Activated CD4-positive, alpha-beta T cell treated with anti-CD3 and anti-CD28 coated beads for 36 hours (primary cell): ENCODE measurements at regions of chr2 and their contacts with region 1.

Region 1: DNA sequence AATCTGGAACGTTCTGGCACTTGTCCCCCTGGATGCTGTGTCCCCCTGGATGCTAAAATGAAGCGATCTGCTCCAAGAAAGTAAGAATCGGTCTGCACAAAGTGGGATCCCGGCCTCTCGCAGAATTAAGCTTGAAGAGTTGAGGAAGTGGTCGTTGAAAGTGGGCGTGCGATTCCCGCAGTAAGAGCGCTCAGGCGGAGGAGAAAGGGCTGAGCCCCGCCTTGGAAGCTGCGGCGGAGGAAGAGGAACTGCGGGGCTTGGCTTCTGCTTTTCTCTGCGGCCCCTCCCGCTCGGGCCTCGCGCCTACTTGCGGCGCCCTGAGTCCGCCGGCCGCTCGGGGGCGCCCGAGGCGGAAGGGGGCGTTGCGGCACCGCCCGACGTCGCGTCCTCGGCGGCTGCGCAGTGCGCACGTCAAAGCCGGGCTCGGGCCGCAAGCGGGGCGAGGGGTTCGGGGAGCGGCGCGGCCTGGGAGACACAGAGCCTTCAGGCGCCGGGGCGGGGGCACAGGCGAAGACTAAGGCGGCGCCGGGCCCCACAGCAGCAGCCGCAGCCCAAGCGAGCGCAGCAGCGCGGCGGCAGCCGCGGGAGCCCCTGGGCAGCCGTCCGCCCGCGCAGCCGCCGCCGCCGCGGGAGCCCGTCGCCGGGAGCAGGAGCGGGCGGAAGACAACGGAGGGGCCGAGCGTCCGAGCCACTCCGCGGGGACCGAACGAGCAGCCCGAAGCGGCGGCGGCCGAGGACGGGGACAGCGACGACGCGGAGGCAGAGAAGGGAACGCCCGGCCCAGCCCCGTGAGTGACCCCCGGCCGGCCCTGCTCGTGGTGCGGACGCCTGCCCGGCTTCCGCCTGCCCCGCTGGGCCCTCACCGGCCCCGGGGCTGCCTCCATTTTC is at the start of gene CAB39:
- DNase-seq: peak; percentile 93
- ATAC-seq: peak; percentile 83
- H3K4me3 Mint-ChIP-seq: peak within 1 kb of the TSS; percentile 94
- H3K27ac Mint-ChIP-seq: peak within 1 kb of the TSS; percentile 95
- H3K4me1 Mint-ChIP-seq: peaks cover 38% of the 10 kb centered on the region
- H3K27me3 Mint-ChIP-seq: no peaks in the 10 kb centered on the region
- total RNA-seq, gene CAB39: 122 to 148 TPM

Region 2: DNA sequence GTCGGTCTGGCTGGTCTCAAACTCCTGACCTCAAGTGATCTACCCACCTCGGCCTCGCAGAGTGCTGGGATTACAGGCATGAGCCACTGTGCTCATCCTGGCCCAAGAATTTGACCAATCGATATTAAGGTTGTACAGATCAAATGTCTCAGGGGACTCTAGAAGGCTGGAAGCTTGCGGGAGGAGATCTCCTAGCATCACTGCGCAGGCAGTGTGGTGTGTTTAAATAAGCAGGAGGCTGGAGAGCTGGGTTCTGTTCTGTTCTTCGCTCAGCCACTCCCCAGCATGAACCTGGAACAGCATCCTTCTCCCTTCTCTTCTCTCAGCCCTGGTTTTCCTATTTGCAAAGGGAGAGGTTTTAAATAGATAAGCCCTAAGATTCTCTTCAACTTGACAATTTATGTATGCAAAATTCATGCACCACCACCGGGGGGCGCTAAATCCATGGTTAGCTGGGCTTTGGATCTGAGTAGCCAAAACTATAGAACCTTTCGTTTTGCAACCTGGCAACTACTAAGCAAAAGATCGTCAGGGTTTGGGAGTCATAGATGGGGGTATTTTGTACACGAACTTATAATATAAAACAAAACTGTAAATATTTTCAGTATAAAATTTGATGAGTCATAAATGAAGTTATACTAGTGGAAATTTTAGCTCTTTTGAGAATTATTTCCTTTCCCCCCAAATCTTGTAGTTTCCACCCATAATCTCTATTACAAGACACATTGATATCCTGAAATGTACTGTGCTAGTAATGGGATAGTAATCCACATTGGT is 704.6 kb before region 1 on chr2:
- CTCF ChIA-PET with region 1: no interaction called
- POLR2A ChIA-PET with region 1: no interaction called
- intact Hi-C with region 1: loop called in 1 of 2 experiments (anchors 10 kb)
- DNase-seq: peak; percentile 92
- ATAC-seq: peak; percentile 69
- H3K4me3 Mint-ChIP-seq: no peak overlapping the region
- H3K27ac Mint-ChIP-seq: no peak overlapping the region
- H3K4me1 Mint-ChIP-seq: peaks cover 5% of the 10 kb centered on the region
- H3K27me3 Mint-ChIP-seq: no peaks in the 10 kb centered on the region

Region 3: GRCh38 chr2:230411570-230412370 is 300.9 kb before region 1 on chr2:
- CTCF ChIA-PET with region 1: no interaction called
- POLR2A ChIA-PET with region 1: interaction called, 3 read pairs
- intact Hi-C with region 1: loop called in 1 of 2 experiments (anchors 5 kb)
- DNase-seq: peak; percentile 76
- ATAC-seq: peak; percentile 66
- H3K4me3 Mint-ChIP-seq: peak overlapping the region; percentile 85
- H3K27ac Mint-ChIP-seq: peak overlapping the region; percentile 96
- H3K4me1 Mint-ChIP-seq: peaks cover 60% of the 10 kb centered on the region
- H3K27me3 Mint-ChIP-seq: no peaks in the 10 kb centered on the region

Region 4: GRCh38 chr2:230658877-230659652 is 53.6 kb before region 1 on chr2:
- CTCF ChIA-PET with region 1: interaction called, 8 read pairs
- POLR2A ChIA-PET with region 1: interaction called, 5 read pairs
- intact Hi-C with region 1: loop called (anchors 1 kb)
- DNase-seq: peak; percentile 90
- ATAC-seq: peak; percentile 74
- H3K4me3 Mint-ChIP-seq: peak overlapping the region; percentile 73
- H3K27ac Mint-ChIP-seq: peak overlapping the region; percentile 97
- H3K4me1 Mint-ChIP-seq: peaks cover 92% of the 10 kb centered on the region
- H3K27me3 Mint-ChIP-seq: no peaks in the 10 kb centered on the region

Region 5: GRCh38 chr2:230731512-230731911 is 18.8 kb after region 1 on chr2:
- CTCF ChIA-PET with region 1: interaction called, 23 read pairs
- POLR2A ChIA-PET with region 1: no interaction called
- intact Hi-C with region 1: no loop called
- DNase-seq: no peak
- ATAC-seq: no peak
- H3K4me3 Mint-ChIP-seq: no peak overlapping the region
- H3K27ac Mint-ChIP-seq: no peak overlapping the region
- H3K4me1 Mint-ChIP-seq: peaks cover 67% of the 10 kb centered on the region
- H3K27me3 Mint-ChIP-seq: no peaks in the 10 kb centered on the region

Region 6: DNA sequence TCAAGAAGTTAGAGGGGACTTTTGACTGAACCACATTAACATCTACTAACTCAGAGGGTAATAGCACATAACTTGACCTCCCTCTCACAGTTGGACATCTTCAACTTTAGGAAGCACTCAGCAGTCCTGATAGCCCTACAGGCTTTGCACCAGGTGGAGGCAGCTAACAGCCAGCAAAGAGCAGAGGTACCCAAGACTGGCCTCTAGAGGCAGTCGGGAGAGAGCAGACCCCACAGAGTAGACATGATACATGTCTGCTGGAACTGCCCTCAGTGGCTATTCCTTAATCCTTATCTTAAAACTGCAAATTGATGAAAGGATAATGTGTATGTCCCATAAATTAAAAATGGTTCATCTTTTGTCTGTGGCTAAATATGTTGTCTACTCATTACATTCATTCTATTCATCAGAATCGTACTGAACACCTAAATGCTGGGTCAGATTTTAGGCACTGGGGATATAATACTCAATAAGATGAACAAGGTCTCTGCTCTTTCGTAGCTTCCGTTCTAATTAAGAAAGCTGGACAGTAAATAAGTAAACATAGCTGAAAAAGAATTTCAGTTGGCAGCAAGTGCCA is 49.7 kb after region 1 on chr2:
- CTCF ChIA-PET with region 1: interaction called, 11 read pairs
- POLR2A ChIA-PET with region 1: interaction called, 3 read pairs
- intact Hi-C with region 1: no loop called
- DNase-seq: peak; percentile 44
- ATAC-seq: peak; percentile 80
- H3K4me3 Mint-ChIP-seq: no peak overlapping the region
- H3K27ac Mint-ChIP-seq: peak overlapping the region; percentile 20
- H3K4me1 Mint-ChIP-seq: peaks cover 69% of the 10 kb centered on the region
- H3K27me3 Mint-ChIP-seq: no peaks in the 10 kb centered on the region

Region 7: DNA sequence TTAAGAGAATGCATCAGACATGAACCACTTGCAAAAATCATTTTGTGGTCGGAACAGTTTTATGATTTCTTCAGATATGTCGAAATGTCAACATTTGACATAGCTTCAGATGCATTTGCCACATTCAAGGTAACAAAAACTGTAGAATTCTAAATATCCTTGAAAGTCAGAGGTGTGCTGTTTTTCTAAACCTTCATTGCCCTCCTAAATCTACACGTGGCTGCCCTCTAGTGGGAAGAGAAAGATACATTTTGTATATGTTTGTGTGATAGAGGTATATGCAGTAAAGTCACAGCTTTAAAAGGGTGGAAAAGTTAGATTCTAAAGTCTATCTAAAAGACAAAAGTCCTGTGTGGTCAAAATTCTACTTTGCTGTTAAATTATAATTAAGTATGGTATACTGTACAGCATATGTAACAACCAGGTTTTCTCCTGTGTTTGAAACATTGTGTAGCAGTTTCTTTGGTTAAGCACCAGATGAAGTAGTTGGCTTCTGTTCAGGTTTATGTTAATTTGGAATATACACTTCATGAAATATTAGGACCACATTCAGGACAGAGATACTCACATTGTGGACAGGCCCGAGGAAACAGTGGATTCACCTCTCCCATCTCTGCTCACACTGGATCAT is 86.2 kb after region 1 on chr2:
- CTCF ChIA-PET with region 1: interaction called, 36 read pairs
- POLR2A ChIA-PET with region 1: interaction called, 12 read pairs
- intact Hi-C with region 1: loop called (anchors 1 kb)
- DNase-seq: peak; percentile 63
- ATAC-seq: no peak
- H3K4me3 Mint-ChIP-seq: no peak overlapping the region
- H3K27ac Mint-ChIP-seq: peak overlapping the region; percentile 82
- H3K4me1 Mint-ChIP-seq: peaks cover 18% of the 10 kb centered on the region
- H3K27me3 Mint-ChIP-seq: no peaks in the 10 kb centered on the region

Region 8: GRCh38 chr2:231334179-231334930 is 621.7 kb after region 1 on chr2:
- CTCF ChIA-PET with region 1: no interaction called
- POLR2A ChIA-PET with region 1: no interaction called
- intact Hi-C with region 1: no loop called
- DNase-seq: no peak
- ATAC-seq: no peak
- H3K4me3 Mint-ChIP-seq: no peak overlapping the region
- H3K27ac Mint-ChIP-seq: no peak overlapping the region
- H3K4me1 Mint-ChIP-seq: no peaks in the 10 kb centered on the region
- H3K27me3 Mint-ChIP-seq: no peaks in the 10 kb centered on the region